Mammary epithelial cell (primary cell): ENCODE measurements at regions of chr10 and their contacts with region 1.

Region 1: GRCh38 chr10:43453266-43453831 is 16.4 kb downstream of the ZNF487 start:
- DNase-seq: no peak
- H3K4me3 ChIP-seq: no peak overlapping the region
- H3K27ac ChIP-seq: peak overlapping the region; percentile 65
- H3K4me1 ChIP-seq: peaks cover 37% of the 10 kb centered on the region
- H3K27me3 ChIP-seq: no peaks in the 10 kb centered on the region
- CTCF ChIP-seq: no peak

Region 2: GRCh38 chr10:43380610-43381222 is 72.6 kb before region 1 on chr10:
- CTCF ChIA-PET with region 1: interaction called, 12 read pairs
- dilution Hi-C with region 1: no loop called
- in situ Hi-C with region 1: no loop called
- intact Hi-C with region 1: no loop called
- DNase-seq: no peak
- H3K4me3 ChIP-seq: no peak overlapping the region
- H3K27ac ChIP-seq: no peak overlapping the region
- H3K4me1 ChIP-seq: peaks cover 7% of the 10 kb centered on the region
- H3K27me3 ChIP-seq: no peaks in the 10 kb centered on the region
- CTCF ChIP-seq: peak; percentile 19 to 27

Region 3: DNA sequence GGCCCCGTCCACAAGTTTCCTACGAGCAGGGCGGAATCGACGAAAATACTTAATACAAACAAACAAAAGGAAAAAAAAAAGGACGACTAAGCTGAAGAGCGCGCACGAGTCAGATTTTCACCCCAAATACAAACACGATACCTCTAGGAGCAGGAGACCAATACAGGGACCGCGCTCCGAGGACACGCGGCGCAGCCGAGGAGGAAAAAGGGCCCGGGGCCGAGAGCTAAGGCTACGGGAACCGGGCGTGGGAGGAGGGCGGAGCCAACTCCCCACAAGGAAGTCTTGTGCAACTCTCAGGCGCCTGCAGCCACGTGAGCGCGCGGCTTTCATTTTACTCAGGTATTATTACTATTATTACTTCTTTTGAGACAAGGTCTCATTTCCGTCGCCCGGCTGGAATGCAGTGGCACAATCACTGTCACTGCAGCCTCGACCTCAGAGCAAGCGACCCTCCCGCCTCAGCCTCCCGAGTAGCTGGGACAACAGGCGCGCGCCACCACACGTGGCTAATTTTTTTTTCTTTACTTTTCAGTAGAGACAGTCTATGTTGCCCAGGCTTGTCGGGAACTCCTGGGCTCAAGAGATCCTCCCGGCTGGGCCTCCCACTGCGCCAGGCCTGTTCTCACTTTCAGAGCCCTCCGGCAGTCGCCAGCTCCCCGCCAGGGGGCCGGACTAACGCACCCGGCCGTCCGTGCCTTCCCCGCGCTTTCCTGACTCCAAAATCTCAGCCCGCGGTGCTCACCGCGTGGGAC is 45.6 kb before region 1 on chr10:
- CTCF ChIA-PET with region 1: no interaction called
- dilution Hi-C with region 1: no loop called
- in situ Hi-C with region 1: loop called (anchors 5 kb)
- intact Hi-C with region 1: no loop called
- DNase-seq: peak; percentile 86
- H3K4me3 ChIP-seq: peak overlapping the region; percentile 72 to 93 (median 89)
- H3K27ac ChIP-seq: peak overlapping the region; percentile 97
- H3K4me1 ChIP-seq: peaks cover 28% of the 10 kb centered on the region
- H3K27me3 ChIP-seq: no peaks in the 10 kb centered on the region
- CTCF ChIP-seq: peak; percentile 9 to 53